ENCODE measurements at regions of chr11 and their contacts with region 1.

Region 1: GRCh38 chr11:33329705-33330329 is 72.6 kb downstream of the HIPK3 start:
- DNase-seq: peak; percentile 50
- H3K4me3 ChIP-seq: no peak overlapping the region
- H3K27ac ChIP-seq: no peak overlapping the region
- H3K4me1 ChIP-seq: peaks cover 4 to 44% (median 10%) of the 10 kb centered on the region in 4 donors
- H3K27me3 ChIP-seq: no peaks in the 10 kb centered on the region
- CTCF ChIP-seq: peak; percentile 57 to 72 (median 65)
- EP300 ChIP-seq: no peak
- POLR2A ChIP-seq: no peak

Region 2: GRCh38 chr11:32960553-32961164 is 369.2 kb before region 1 on chr11:
- in situ Hi-C with region 1: loop called in 1 of 4 experiments (anchors 25 kb)
- intact Hi-C with region 1: no loop called
- DNase-seq: no peak
- H3K4me3 ChIP-seq: no peak overlapping the region
- H3K27ac ChIP-seq: no peak overlapping the region
- H3K4me1 ChIP-seq: no peaks in the 10 kb centered on the region
- H3K27me3 ChIP-seq: no peaks in the 10 kb centered on the region
- CTCF ChIP-seq: peak; percentile 67 to 73 (median 71)
- EP300 ChIP-seq: no peak
- POLR2A ChIP-seq: no peak

Region 3: DNA sequence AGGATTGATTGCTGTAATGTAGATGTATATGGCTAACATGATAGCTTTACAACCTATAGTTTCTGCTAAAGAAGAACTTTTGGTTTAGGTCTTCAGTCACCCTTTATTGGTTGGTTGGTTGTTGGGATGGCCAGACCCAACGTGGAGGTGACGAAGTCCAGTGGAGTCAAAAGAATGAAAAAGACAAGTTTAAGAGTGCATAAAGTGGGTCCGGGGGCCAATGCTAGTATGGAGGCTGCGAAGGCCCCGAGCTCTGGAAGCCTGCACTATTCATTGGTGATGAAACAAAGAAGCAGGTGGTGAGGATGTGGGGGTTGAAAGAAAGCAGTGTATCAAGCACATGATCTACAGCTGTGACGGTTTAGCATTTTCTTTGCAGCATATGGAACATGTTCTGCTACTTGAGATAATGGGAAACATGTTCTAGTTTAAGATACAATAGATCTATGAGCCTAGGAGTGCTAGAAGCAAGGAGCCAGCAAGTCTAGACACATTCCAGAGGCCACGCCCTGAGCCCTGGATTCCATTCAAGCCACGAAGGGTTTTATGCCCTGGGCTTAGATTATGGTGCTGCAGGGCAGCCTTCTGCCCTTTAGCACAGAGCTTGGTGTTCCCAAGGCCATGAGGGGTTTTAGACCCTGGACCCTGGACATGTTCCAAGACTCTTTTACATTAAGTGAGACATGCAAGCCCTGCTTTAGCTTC is 284.1 kb before region 1 on chr11:
- in situ Hi-C with region 1: no loop called
- intact Hi-C with region 1: no loop called
- DNase-seq: peak; percentile 85
- H3K4me3 ChIP-seq: no peak overlapping the region
- H3K27ac ChIP-seq: peak overlapping the region; percentile 33 to 66 (median 58)
- H3K4me1 ChIP-seq: peaks cover 0 to 74% (median 15%) of the 10 kb centered on the region in 4 donors
- H3K27me3 ChIP-seq: no peaks in the 10 kb centered on the region
- CTCF ChIP-seq: no peak
- EP300 ChIP-seq: no peak
- POLR2A ChIP-seq: no peak

Region 4: DNA sequence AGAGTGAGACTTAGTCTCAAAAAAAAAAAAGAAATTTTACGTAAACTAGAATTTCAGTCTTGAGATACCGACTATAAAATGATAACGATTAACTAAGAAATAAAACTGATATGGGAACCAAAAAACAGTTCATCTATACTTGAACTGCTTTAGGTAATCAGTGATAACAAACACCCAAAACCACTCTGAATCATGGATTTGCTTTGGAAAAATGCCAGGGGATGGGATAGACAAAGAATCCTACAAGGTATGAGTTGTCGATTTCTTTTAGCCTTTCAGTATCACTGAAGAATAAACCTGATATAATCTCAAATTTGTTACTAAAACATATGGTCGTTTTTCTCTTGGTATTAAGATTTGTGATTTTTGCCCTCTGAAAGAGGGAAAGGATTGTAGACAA is 182.3 kb before region 1 on chr11:
- in situ Hi-C with region 1: no loop called
- intact Hi-C with region 1: no loop called
- DNase-seq: no peak
- H3K4me3 ChIP-seq: no peak overlapping the region
- H3K27ac ChIP-seq: no peak overlapping the region
- H3K4me1 ChIP-seq: peaks cover 0 to 10% (median 5%) of the 10 kb centered on the region in 4 donors
- H3K27me3 ChIP-seq: no peaks in the 10 kb centered on the region
- CTCF ChIP-seq: no peak
- EP300 ChIP-seq: no peak
- POLR2A ChIP-seq: no peak

Region 5: DNA sequence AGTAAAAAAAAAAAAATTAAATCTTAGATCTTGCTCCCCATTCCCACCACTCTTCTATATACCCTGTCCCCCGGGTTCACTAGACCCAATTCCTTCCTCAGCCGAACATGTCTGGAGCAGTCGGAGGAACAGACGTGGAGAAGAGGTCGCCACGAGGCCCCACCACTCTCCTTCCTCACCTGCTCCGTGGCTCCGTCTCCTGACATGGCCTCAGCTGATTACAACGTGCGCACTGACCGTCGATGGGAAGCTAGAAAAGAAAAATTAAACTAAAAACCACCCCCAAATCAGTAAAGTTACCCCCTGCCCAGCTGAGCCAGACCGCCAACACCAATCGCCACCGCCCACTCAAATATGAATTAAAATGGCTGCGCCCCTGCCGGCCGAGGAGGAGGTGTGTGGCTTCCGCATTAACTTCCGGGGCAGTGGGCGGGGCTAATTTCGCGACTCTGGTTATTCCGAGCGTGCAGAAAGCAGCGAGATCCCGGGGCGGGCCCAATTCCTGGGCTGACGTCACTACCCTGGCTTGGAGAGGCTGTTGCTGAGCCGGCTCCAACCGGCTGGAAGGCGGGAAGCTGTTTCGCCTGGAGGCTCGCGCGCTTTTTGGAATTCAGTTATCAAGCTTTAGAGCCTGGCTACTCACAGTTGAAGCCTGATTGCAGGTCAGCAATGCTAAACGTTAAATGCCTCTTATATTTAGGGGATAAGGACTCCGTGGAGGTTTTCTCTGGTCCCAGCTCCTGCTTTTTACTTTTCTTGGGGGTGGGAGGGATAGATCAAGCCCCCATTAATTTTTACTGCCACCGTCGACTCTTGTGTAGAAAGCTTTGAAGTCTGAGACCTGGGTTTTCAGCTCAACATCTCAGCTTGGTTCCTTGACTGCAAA is 168.5 kb before region 1 on chr11 and contains the start of gene CSTF3:
- in situ Hi-C with region 1: loop called in 1 of 4 experiments (anchors 10 kb)
- intact Hi-C with region 1: no loop called
- DNase-seq: peak; percentile 100
- H3K4me3 ChIP-seq: peak within 1 kb of the TSS; percentile 60 to 89 (median 83)
- H3K27ac ChIP-seq: peak within 1 kb of the TSS; percentile 80 to 90 (median 85)
- H3K4me1 ChIP-seq: peaks cover 5 to 41% (median 18%) of the 10 kb centered on the region in 4 donors
- H3K27me3 ChIP-seq: no peaks in the 10 kb centered on the region
- CTCF ChIP-seq: peak; percentile 44 to 96 (median 64)
- EP300 ChIP-seq: no peak
- POLR2A ChIP-seq: peak; percentile 74
- total RNA-seq, gene CSTF3: 2.2 to 167 (median 14.2) TPM

Region 6: DNA sequence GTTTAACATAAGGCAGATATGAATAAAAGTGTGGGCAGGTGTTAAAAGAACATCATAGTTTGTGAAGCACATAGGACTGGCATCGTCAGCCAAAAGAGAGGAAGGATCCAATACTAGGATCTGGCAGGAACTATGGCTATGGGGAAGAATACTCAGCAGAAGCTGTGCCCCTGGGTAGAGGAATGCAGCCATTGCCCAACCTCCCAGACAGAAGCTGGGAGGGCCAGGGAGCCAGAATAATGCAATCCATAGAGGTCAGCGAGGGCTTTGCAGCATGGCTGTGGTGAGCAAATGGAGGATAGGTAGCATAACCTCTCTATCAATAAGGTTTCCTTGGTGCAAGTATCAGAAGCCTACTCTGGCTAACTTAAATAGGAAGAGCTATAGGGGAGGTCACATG is 156.8 kb before region 1 on chr11:
- in situ Hi-C with region 1: loop called (anchors 10 kb)
- intact Hi-C with region 1: no loop called
- DNase-seq: no peak
- H3K4me3 ChIP-seq: no peak overlapping the region
- H3K27ac ChIP-seq: no peak overlapping the region
- H3K4me1 ChIP-seq: peaks cover 0 to 10% (median 0%) of the 10 kb centered on the region in 4 donors
- H3K27me3 ChIP-seq: no peaks in the 10 kb centered on the region
- CTCF ChIP-seq: no peak
- EP300 ChIP-seq: no peak
- POLR2A ChIP-seq: no peak

Region 7: DNA sequence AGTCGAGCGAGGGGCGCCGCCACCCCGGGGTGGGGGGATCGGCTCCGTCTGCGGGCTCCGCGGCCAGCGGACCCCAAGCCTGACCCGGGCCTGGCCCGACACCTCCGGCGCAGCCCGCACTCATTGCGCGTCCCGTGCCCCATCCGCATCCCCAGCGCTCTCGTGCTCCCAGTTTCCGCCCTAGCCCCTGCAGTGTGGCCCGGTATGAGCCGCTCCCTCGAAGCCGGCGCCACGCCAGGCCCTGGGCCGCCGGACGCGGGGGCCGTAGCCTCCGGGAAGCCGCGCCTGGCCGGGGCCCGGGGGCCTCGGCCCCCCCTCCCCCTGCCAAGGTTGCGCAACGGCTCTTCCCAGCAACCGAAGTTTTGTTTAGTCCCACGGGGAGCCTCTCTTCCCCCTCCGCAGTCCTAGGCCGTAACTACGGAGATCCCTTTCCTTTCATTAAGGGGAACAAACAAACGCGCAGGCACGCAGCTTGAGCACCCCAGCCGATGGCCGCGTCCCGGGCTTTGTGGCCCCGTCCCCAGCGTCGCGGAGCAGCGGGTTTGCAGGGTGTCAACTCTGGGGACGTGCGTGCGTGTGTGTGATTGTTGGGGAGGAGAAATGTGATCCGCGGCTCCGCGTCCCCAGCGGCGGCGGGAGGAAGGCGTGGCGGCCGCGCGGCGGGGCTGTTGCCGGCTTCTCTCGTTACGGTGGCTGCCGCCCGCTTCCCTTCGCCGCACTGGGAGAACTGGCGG is 71.8 kb before region 1 on chr11:
- in situ Hi-C with region 1: no loop called
- intact Hi-C with region 1: loop called (anchors 2 kb)
- DNase-seq: peak; percentile 84
- H3K4me3 ChIP-seq: peak overlapping the region; percentile 84 to 99 (median 88)
- H3K27ac ChIP-seq: peak overlapping the region; percentile 99 to 100 (median 100)
- H3K4me1 ChIP-seq: peaks cover 9 to 46% (median 31%) of the 10 kb centered on the region in 4 donors
- H3K27me3 ChIP-seq: no peaks in the 10 kb centered on the region
- CTCF ChIP-seq: peak; percentile 19 to 71 (median 43)
- EP300 ChIP-seq: peak; percentile 10
- POLR2A ChIP-seq: peak; percentile 86

Region 8: GRCh38 chr11:33761471-33761870 is 431.7 kb after region 1 on chr11:
- in situ Hi-C with region 1: no loop called
- intact Hi-C with region 1: no loop called
- DNase-seq: no peak
- H3K4me3 ChIP-seq: no peak overlapping the region
- H3K27ac ChIP-seq: no peak overlapping the region
- H3K4me1 ChIP-seq: no peaks in the 10 kb centered on the region
- H3K27me3 ChIP-seq: no peaks in the 10 kb centered on the region
- CTCF ChIP-seq: no peak
- EP300 ChIP-seq: no peak
- POLR2A ChIP-seq: no peak